ENCODE measurements at regions of chr7 and their contacts with region 1.

Region 1: GRCh38 chr7:151599401-151600227 is 79.9 kb upstream of the RHEB start:
- DNase-seq: no peak

Region 2: GRCh38 chr7:149883452-149883861 is 1716.2 kb before region 1 on chr7:
- intact Hi-C with region 1: no loop called
- DNase-seq: peak; percentile 88

Region 3: DNA sequence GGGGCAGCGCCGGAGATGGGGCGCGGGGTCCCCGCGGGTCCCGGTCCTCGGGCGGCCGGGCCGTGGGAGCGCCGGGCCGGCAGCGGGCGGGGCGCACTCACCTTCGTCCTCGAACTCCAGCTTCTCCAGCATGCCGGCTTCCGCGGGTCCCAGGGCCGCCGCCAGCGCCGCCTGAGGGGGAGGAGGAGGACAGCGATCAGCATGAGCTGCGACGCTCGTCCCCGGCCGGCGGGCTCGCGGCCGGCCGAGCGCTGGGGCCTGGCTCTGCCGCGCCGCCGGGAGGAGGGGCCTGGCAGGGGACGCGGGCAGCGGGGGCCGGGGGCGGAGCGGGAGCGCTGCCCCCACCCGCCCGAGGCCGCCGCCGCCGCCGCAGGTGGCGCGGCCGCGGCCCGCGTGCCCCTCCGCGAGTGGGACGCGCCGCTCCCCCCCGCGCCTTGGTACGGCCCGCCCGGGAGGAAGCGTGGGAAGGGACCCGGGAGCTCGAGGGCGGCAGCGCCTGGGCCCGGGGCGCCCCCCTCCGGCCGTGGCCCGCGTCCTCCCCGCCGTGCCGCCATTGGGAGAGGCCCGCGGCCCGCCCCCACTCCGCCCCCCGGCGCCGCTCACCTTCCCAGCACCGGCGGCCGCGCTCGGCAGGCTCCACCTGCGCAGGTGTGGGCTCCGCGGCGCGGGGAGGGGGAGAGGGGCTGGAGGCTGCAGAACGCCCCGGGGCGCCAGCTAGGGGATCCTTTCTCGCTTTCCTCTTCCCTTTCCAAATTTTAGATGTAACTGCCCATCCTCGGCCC is 32.5 kb after region 1 on chr7:
- intact Hi-C with region 1: loop called in 1 of 2 experiments (anchors 2 kb)
- DNase-seq: peak; percentile 92

Region 4: DNA sequence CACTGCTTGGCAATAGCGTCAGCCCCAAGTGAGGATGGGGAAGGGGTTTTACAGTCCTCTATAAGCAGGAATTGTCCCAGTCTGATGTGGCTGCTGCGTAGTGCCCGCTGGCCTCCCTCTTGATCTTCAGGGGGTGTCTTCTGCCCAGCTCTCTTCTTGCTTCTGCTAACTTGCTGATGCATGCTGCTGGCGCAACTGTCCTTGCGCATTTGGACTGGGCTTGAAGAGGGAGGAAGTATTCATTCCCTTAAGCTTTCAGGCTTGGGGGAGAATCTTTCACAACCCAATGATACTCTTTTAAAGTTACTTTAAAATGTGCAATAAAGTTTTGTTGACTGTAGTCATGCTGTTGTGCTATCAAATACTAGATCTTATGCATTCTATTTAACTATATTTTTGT is 436.2 kb after region 1 on chr7:
- intact Hi-C with region 1: no loop called
- DNase-seq: no peak